A549 (cell line): ENCODE measurements at regions of chr4 and their contacts with region 1.

Region 1: DNA sequence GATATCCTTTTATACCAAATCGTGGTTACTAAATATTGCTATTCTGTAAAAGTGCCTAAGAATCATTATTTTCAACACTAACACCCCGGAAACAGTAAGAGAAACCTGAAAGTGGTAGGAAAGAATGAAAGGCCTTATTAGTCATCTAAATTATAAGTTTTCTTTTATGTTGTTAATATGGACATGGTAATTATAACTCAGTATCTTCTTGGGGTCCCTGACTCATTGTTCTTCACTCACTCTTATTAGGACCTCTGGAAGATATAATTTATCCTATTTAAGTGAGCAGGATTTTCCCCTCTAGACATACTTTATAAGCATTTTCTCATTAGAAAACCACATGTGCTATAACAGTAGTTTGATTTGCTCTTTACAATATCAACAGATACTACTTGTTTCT is 51.0 kb downstream of the SMARCA5 start:
- DNase-seq: no peak
- ATAC-seq: no peak
- H3K4me3 ChIP-seq: no peak overlapping the region
- H3K27ac ChIP-seq: no peak overlapping the region
- H3K4me1 ChIP-seq: no peaks in the 10 kb centered on the region
- CTCF ChIP-seq: no peak
- EP300 ChIP-seq: no peak
- POLR2A ChIP-seq: no peak
- RAD21 ChIP-seq: no peak

Region 2: DNA sequence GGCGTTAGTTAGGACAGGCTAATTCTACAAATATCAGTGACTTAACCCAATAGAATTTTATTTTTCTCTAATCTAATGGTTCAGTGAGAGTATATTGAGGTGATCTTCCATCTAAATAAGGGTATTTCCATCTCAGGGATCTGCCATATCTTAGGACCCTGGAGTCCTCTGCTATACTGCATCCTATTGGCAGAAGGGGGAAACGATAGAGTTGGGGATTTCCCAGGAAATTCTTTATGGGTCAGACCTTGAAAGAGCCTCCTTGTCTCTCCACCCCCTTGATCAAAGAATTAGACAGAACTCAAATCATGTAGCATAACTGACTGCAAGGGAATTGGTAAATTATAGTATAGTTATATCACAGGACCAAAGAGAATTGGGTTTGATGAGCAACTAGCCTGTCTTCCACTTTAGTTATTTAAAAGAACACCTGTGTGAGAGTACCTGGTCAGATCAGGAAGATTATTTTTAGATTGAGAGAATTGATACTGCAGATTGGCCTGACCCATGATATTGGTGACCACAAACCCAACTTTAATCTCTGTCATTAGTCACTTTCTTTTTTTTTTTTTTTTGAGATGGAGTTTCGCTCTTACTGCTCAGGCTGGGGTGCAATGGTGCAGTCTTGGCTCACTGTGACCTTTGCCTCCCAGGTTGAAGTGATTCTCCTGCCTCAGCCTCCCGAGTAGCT is 25.3 kb before region 1 on chr4:
- CTCF ChIA-PET with region 1: interaction called, 11 read pairs
- POLR2A ChIA-PET with region 1: interaction called, 11 read pairs
- DNase-seq: no peak
- ATAC-seq: no peak
- H3K4me3 ChIP-seq: no peak overlapping the region
- H3K27ac ChIP-seq: no peak overlapping the region
- H3K4me1 ChIP-seq: no peaks in the 10 kb centered on the region
- CTCF ChIP-seq: no peak
- EP300 ChIP-seq: no peak
- POLR2A ChIP-seq: no peak
- RAD21 ChIP-seq: no peak

Region 3: DNA sequence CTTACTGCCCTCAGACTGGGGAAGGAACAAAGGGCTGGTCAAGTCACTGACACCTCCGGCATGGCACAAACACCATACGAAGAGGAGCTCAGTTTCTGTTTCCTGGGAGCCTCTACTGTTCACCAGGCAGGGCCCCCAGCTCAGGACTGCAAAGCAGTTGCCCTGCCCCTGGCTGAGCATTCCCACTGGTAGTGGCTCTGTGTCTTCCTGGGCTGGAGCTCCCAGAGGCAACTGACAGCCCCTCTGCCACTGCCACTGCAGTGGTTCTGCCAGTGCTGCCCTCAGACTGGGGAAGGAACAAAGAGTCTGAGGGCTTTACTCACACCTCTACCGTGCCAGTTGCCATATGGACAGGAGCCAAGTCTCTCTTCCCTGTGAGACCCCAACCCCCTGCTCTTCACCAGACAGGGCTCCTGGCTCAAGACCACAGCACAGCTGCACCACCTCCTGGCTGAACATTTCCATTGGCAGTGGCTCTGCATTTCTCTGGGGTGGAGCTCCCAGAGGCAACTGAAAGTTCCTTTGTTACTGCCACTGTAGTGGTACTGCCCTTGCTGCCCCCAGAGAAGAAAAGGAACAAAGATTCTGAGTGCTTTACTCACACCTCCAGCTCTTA is 17.0 kb after region 1 on chr4:
- CTCF ChIA-PET with region 1: no interaction called
- POLR2A ChIA-PET with region 1: no interaction called
- DNase-seq: no peak
- ATAC-seq: no peak
- H3K4me3 ChIP-seq: no peak overlapping the region
- H3K27ac ChIP-seq: no peak overlapping the region
- H3K4me1 ChIP-seq: no peaks in the 10 kb centered on the region
- CTCF ChIP-seq: no peak
- EP300 ChIP-seq: no peak
- POLR2A ChIP-seq: no peak
- RAD21 ChIP-seq: no peak